Ovary (tissue), 10 donors: ENCODE measurements at regions of chr22 and their contacts with region 1.

Region 1: GRCh38 chr22:27825174-27825573 is 23.6 kb upstream of the MN1 start:
- DNase-seq: no peak
- H3K4me3 ChIP-seq: no peak overlapping the region
- H3K27ac ChIP-seq: no peak overlapping the region
- H3K4me1 ChIP-seq: peaks cover 11% of the 10 kb centered on the region
- H3K27me3 ChIP-seq: no peaks in the 10 kb centered on the region
- CTCF ChIP-seq: no peak
- EP300 ChIP-seq: no peak
- POLR2A ChIP-seq: no peak

Region 2: GRCh38 chr22:27866132-27867086 is 41.2 kb after region 1 on chr22:
- intact Hi-C with region 1: loop called in 1 of 4 experiments (anchors 5 kb)
- DNase-seq: peak; percentile 72 to 90 (median 78)
- H3K4me3 ChIP-seq: no peak overlapping the region
- H3K27ac ChIP-seq: peak overlapping the region; percentile 85 to 93
- H3K4me1 ChIP-seq: peaks cover 15% of the 10 kb centered on the region
- H3K27me3 ChIP-seq: no peaks in the 10 kb centered on the region
- CTCF ChIP-seq: no peak
- EP300 ChIP-seq: peak; percentile 55
- POLR2A ChIP-seq: no peak